Endothelial cell of umbilical vein (primary cell): ENCODE measurements at regions of chr10 and their contacts with region 1.

Region 1: DNA sequence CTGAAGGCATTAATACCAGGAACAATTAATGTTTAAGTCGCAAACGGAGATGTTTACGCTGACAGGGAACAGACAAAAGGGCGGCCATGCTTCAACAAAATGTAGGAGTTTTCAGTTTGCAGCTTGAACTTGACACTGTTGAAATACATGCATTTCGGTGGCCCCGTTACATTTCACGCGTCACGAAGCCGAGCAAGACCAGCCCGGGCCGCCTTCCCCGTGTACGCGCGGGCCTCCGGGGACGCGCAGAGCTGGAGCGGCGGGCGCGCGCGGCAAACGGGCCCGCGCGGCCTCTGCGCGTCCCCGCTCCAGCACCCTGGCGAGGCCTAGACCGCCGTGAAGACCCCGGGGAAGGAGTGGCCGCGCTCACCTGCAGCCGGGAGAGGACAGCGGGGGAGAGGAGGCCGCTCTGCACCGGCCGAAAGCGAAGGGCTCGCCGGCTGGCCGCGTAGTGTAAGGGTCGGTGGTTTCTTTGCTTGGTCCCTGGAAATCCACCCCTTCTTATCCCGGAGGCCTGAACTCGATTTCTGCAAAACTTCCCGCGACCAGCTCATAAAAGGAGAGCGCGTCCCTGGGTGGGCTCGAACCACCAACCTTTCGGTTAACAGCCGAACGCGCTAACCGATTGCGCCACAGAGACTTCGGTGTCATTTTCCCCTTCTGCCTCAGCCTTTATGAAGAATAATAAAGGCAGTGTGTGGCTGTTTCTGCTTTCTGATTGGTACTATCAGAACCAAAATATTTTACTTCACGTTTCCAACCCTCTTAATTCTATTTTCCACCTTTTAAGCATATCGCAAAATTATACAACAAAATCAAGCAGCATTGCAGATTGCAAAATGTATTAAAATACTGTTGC is 11.4 kb upstream of the EBLN1 start:
- DNase-seq: peak; percentile 94
- H3K4me3 ChIP-seq: peak overlapping the region; percentile 69 to 97 (median 96)
- H3K27ac ChIP-seq: peak overlapping the region; percentile 49
- H3K4me1 ChIP-seq: peaks cover 9% of the 10 kb centered on the region
- H3K27me3 ChIP-seq: no peaks in the 10 kb centered on the region
- CTCF ChIP-seq: no peak
- POLR2A ChIP-seq: peak; percentile 30

Region 2: DNA sequence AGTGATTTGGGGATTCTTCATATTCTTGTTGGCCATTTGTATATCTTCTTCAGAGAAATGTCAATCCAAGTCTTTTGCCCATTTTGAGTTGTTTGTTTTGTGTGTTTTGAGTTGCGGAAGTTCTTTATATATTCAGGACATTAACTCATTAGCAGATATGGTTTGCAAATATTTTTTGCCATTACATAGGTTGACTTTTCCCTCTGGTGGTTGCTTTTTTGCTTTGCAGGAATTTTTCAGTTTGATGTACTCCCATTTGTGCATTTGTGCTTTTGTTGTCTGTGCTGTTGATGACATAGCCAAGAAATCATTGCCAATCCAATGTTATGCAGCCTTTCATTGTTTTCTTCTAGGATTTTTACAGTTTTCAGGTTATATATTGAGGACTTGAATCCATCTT is 162.1 kb before region 1 on chr10:
- CTCF ChIA-PET with region 1: no interaction called
- POLR2A ChIA-PET with region 1: no interaction called
- dilution Hi-C with region 1: no loop called
- intact Hi-C with region 1: no loop called
- DNase-seq: no peak
- H3K4me3 ChIP-seq: no peak overlapping the region
- H3K27ac ChIP-seq: no peak overlapping the region
- H3K4me1 ChIP-seq: no peaks in the 10 kb centered on the region
- H3K27me3 ChIP-seq: no peaks in the 10 kb centered on the region
- CTCF ChIP-seq: no peak
- POLR2A ChIP-seq: no peak

Region 3: DNA sequence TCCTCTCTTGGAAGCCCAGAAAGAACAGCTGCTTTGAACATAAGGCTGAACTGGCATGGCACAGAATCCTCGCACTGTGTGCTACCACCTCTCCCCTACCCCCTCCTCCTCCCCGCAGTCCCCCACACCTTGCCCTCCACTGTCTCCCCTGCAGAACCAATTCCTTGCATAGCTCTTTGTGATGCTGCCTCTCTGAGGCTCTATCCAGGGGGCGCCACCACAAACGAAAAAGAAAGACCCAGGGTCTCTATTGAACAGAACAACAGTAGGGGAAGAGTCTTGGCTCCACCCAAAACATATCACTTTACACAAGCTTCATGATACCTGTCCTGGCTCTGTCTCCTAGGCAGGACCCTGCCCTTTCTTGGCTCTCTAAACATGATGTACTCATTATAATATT is 14.8 kb after region 1 on chr10:
- CTCF ChIA-PET with region 1: interaction called, 10 read pairs
- POLR2A ChIA-PET with region 1: interaction called, 3 read pairs
- dilution Hi-C with region 1: no loop called
- intact Hi-C with region 1: no loop called
- DNase-seq: no peak
- H3K4me3 ChIP-seq: no peak overlapping the region
- H3K27ac ChIP-seq: no peak overlapping the region
- H3K4me1 ChIP-seq: peaks cover 7% of the 10 kb centered on the region
- H3K27me3 ChIP-seq: no peaks in the 10 kb centered on the region
- CTCF ChIP-seq: peak in 1 of 2 donors; percentile 9
- POLR2A ChIP-seq: no peak

Region 4: DNA sequence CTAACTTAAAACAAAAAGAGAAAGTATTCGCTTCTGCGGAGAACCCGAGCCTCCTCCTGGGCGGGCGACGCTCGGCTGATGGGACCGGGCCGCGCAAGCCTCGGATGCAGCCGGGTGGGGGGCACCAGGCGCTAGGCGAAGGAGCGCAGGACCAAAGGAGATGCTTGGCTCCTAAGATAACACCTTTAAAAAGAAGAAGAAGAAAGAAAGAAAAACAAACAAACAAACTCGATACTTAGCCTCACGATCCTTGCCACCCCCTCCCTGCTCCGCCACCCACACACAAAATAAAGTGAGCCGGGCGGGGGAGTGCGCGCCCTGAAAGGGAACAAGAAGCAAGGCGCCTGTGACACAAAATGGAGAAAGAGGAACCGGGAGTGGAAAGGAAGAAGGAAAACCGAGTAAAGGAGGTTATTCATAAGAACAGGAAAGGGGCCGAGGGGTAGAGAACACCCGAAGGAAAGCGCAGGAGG is 22.6 kb after region 1 on chr10:
- CTCF ChIA-PET with region 1: interaction called, 8 read pairs
- POLR2A ChIA-PET with region 1: no interaction called
- dilution Hi-C with region 1: no loop called
- intact Hi-C with region 1: loop called (anchors 1 kb)
- DNase-seq: peak; percentile 67
- H3K4me3 ChIP-seq: peak overlapping the region; percentile 58 to 87 (median 58)
- H3K27ac ChIP-seq: peak overlapping the region; percentile 81
- H3K4me1 ChIP-seq: peaks cover 6% of the 10 kb centered on the region
- H3K27me3 ChIP-seq: peaks cover under 1 to 1% of the 10 kb centered on the region in 2 experiments
- CTCF ChIP-seq: no peak
- POLR2A ChIP-seq: no peak

Region 5: GRCh38 chr10:22316285-22317120 is 87.3 kb after region 1 on chr10 and contains the start of gene COMMD3:
- CTCF ChIA-PET with region 1: interaction called, 17 read pairs
- POLR2A ChIA-PET with region 1: interaction called, 12 read pairs
- dilution Hi-C with region 1: no loop called
- intact Hi-C with region 1: loop called (anchors 1 kb)
- DNase-seq: peak; percentile 88
- H3K4me3 ChIP-seq: peak within 1 kb of the TSS; percentile 67 to 93 (median 83)
- H3K27ac ChIP-seq: peak within 1 kb of the TSS; percentile 69
- H3K4me1 ChIP-seq: peaks cover 17% of the 10 kb centered on the region
- H3K27me3 ChIP-seq: no peaks in the 10 kb centered on the region
- CTCF ChIP-seq: no peak
- POLR2A ChIP-seq: peak; percentile 89
- total RNA-seq, gene COMMD3: 48.9 and 49.8 TPM in 2 replicates

Region 6: GRCh38 chr10:22816298-22816653 is 587.1 kb after region 1 on chr10:
- CTCF ChIA-PET with region 1: no interaction called
- POLR2A ChIA-PET with region 1: no interaction called
- dilution Hi-C with region 1: no loop called
- intact Hi-C with region 1: loop called (anchors 5 kb)
- DNase-seq: peak; percentile 93
- H3K4me3 ChIP-seq: no peak overlapping the region
- H3K27ac ChIP-seq: peak overlapping the region; percentile 86
- H3K4me1 ChIP-seq: peaks cover 15% of the 10 kb centered on the region
- H3K27me3 ChIP-seq: no peaks in the 10 kb centered on the region
- CTCF ChIP-seq: no peak
- POLR2A ChIP-seq: no peak